CD4-positive, alpha-beta memory T cell (primary cell): ENCODE measurements at regions of chrX and their contacts with region 1.

Region 1: GRCh38 chrX:118495061-118495921 is at the start of gene DOCK11:
- DNase-seq: peak; percentile 79 to 90 (median 82)
- H3K4me3 ChIP-seq: peak within 1 kb of the TSS; percentile 83 to 91
- H3K4me3 Mint-ChIP-seq: peak within 1 kb of the TSS; percentile 95 to 100 (median 99)
- H3K27ac ChIP-seq: peak within 1 kb of the TSS; percentile 83
- H3K27ac Mint-ChIP-seq: peak within 1 kb of the TSS; percentile 94 to 99 (median 98)
- H3K4me1 ChIP-seq: peaks cover 36% of the 10 kb centered on the region
- H3K4me1 Mint-ChIP-seq: peaks cover 10 to 41% (median 22%) of the 10 kb centered on the region in 4 donors
- H3K27me3 ChIP-seq: no peaks in the 10 kb centered on the region
- H3K27me3 Mint-ChIP-seq: no peaks in the 10 kb centered on the region
- total RNA-seq, gene DOCK11: 110 to 112 TPM

Region 2: DNA sequence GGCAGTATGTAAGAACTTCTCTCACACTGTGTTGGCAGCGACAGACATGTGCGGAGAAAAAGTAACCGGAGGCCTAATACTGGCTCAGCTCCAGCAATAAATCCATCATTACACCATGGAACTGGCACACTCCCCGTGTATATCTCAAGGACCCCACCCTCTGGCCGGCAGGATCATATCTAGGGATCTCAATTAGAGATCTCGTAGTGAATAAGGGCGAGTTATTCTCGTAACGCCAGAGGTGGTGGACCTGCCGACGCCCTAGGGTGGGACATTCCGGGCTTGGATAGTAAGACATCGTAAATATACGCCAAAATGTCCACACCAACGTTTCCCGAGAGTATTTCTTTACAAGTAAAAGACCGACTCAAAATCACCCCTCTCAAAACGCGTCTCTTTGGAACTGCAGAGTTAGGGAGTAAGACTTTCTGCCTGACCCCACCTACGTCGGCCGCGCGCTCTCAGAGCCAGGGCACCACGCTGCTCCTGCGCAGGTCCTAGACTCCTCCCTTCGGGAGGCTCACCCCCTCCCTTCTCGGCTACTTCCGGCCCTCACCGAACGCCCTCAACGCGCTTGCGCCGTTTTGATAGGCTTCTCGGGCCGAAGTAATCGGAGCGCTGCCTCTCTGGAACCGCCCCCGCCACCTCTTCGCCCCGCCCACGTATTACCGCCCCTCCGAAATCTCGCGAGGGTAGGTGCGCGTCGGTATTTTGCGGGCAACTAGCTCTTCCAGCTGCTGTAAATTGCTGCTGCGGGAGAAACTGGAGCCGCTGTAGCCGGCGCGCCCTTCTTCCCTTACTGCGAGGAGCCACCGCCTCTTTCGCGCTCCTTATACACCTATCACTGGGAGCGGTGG is 149.7 kb before region 1 on chrX and contains the start of gene WDR44:
- CTCF ChIA-PET with region 1: no interaction called
- POLR2A ChIA-PET with region 1: interaction called, 6 read pairs
- intact Hi-C with region 1: loop called (anchors 1 kb)
- DNase-seq: peak; percentile 88 to 95 (median 94)
- H3K4me3 ChIP-seq: peak within 1 kb of the TSS; percentile 76 to 85
- H3K4me3 Mint-ChIP-seq: peak within 1 kb of the TSS; percentile 97 to 100 (median 99)
- H3K27ac ChIP-seq: peak within 1 kb of the TSS; percentile 84
- H3K27ac Mint-ChIP-seq: peak within 1 kb of the TSS; percentile 97 to 100 (median 98)
- H3K4me1 ChIP-seq: peaks cover 38% of the 10 kb centered on the region
- H3K4me1 Mint-ChIP-seq: peaks cover 16 to 51% (median 27%) of the 10 kb centered on the region in 4 donors
- H3K27me3 ChIP-seq: no peaks in the 10 kb centered on the region
- H3K27me3 Mint-ChIP-seq: no peaks in the 10 kb centered on the region
- total RNA-seq, gene WDR44: 20.5 to 24.1 TPM

Region 3: GRCh38 chrX:118520216-118521206 is 25.2 kb after region 1 on chrX:
- CTCF ChIA-PET with region 1: interaction called, 4 read pairs
- POLR2A ChIA-PET with region 1: interaction called, 71 read pairs
- intact Hi-C with region 1: loop called (anchors 1 kb)
- DNase-seq: no peak
- H3K4me3 ChIP-seq: no peak overlapping the region
- H3K4me3 Mint-ChIP-seq: peak overlapping the region in 4 of 8 donors; percentile 6 to 31 (median 22)
- H3K27ac ChIP-seq: peak overlapping the region; percentile 34
- H3K27ac Mint-ChIP-seq: peak overlapping the region; percentile 23 to 94 (median 66)
- H3K4me1 ChIP-seq: peaks cover 79% of the 10 kb centered on the region
- H3K4me1 Mint-ChIP-seq: peaks cover 38 to 76% (median 55%) of the 10 kb centered on the region in 4 donors
- H3K27me3 ChIP-seq: no peaks in the 10 kb centered on the region
- H3K27me3 Mint-ChIP-seq: no peaks in the 10 kb centered on the region

Region 4: GRCh38 chrX:118536687-118537461 is 41.6 kb after region 1 on chrX:
- CTCF ChIA-PET with region 1: interaction called, 18 read pairs
- POLR2A ChIA-PET with region 1: interaction called, 289 read pairs
- intact Hi-C with region 1: loop called (anchors 1 kb)
- DNase-seq: peak; percentile 45 to 66 (median 52)
- H3K4me3 ChIP-seq: no peak overlapping the region
- H3K4me3 Mint-ChIP-seq: peak overlapping the region in 7 of 8 donors; percentile 34 to 76 (median 60)
- H3K27ac ChIP-seq: peak overlapping the region; percentile 48
- H3K27ac Mint-ChIP-seq: peak overlapping the region; percentile 65 to 90 (median 83)
- H3K4me1 ChIP-seq: peaks cover 77% of the 10 kb centered on the region
- H3K4me1 Mint-ChIP-seq: peaks cover 42 to 74% (median 56%) of the 10 kb centered on the region in 4 donors
- H3K27me3 ChIP-seq: no peaks in the 10 kb centered on the region
- H3K27me3 Mint-ChIP-seq: no peaks in the 10 kb centered on the region

Region 5: DNA sequence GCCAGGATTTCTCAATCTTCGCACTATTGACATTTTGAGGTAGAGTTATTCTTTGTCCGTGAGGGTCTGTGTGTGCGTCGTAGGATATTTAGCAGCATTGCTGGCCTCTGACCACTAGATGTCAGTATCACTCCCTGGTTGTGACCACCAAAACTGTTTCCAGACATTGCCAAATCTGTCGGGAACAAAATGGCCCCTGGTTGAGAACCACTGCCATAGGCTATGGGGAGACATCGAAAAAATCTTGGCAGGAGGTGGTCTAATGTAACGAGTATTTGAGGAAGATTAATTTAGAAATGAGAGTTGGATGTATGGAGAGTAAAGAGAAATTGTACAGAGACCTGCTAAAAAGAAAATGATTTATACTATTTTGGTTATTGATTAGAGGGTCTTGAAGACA is 108.7 kb after region 1 on chrX:
- CTCF ChIA-PET with region 1: interaction called, 3 read pairs
- POLR2A ChIA-PET with region 1: interaction called, 3 read pairs
- intact Hi-C with region 1: loop called (anchors 5 kb)
- DNase-seq: peak; percentile 27 to 43 (median 33)
- H3K4me3 ChIP-seq: no peak overlapping the region
- H3K4me3 Mint-ChIP-seq: peak overlapping the region in 3 of 8 donors; percentile 20 to 63 (median 56)
- H3K27ac ChIP-seq: no peak overlapping the region
- H3K27ac Mint-ChIP-seq: peak overlapping the region in 5 of 7 donors; percentile 2 to 89 (median 42)
- H3K4me1 ChIP-seq: peaks cover 11% of the 10 kb centered on the region
- H3K4me1 Mint-ChIP-seq: peaks cover 11 to 16% (median 15%) of the 10 kb centered on the region in 4 donors
- H3K27me3 ChIP-seq: no peaks in the 10 kb centered on the region
- H3K27me3 Mint-ChIP-seq: no peaks in the 10 kb centered on the region